Panc1 (cell line): ENCODE measurements at regions of chr2 and their contacts with region 1.

Region 1: DNA sequence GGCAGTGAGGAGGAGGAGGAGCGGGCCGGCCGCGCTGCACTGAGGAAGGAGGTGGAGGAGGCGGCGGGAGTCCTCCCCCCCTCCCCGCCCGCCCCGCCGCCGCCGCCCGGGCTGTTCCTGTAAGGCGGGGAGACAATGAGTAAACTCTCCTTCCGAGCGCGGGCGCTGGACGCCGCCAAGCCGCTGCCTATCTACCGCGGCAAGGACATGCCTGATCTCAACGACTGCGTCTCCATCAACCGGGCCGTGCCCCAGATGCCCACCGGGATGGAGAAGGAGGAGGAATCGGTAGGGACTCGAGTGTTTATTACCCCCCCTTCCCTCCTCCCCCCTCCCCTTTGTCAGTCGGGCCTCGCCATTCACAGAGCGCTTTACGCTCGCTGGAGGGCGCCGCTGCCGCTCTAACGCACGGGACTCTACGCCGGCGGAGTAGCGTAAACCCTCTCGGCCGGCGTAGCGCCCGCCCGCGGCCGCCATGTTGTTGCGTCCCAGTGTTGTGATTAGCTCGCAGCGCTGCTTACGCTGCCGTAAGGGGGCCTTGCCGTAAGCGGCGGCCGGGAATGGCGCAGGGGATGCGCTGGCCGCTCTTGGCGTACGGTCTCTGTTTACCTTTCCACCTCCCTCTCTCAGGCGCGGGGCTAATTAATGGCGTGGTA is 460 bp downstream of the EPC2 start:
- DNase-seq: peak; percentile 83
- ATAC-seq: peak; percentile 84
- H3K4me3 ChIP-seq: peak overlapping the region; percentile 87 to 95
- H3K27ac ChIP-seq: peak overlapping the region; percentile 80
- H3K4me1 ChIP-seq: peaks cover 13% of the 10 kb centered on the region
- H3K27me3 ChIP-seq: peaks cover 10% of the 10 kb centered on the region
- CTCF ChIP-seq: peak; percentile 47

Region 2: GRCh38 chr2:148664229-148664628 is 19.2 kb after region 1 on chr2:
- CTCF ChIA-PET with region 1: no interaction called
- POLR2A ChIA-PET with region 1: interaction called, 12 read pairs
- in situ Hi-C with region 1: no loop called
- intact Hi-C with region 1: no loop called
- DNase-seq: no peak
- ATAC-seq: no peak
- H3K4me3 ChIP-seq: no peak overlapping the region
- H3K27ac ChIP-seq: no peak overlapping the region
- H3K4me1 ChIP-seq: peaks cover 15% of the 10 kb centered on the region
- H3K27me3 ChIP-seq: no peaks in the 10 kb centered on the region
- CTCF ChIP-seq: no peak

Region 3: GRCh38 chr2:148745151-148745851 is 100.3 kb after region 1 on chr2:
- CTCF ChIA-PET with region 1: interaction called, 10 read pairs
- POLR2A ChIA-PET with region 1: no interaction called
- in situ Hi-C with region 1: no loop called
- intact Hi-C with region 1: no loop called
- DNase-seq: no peak
- ATAC-seq: no peak
- H3K4me3 ChIP-seq: no peak overlapping the region
- H3K27ac ChIP-seq: no peak overlapping the region
- H3K4me1 ChIP-seq: no peaks in the 10 kb centered on the region
- H3K27me3 ChIP-seq: no peaks in the 10 kb centered on the region
- CTCF ChIP-seq: no peak

Region 4: GRCh38 chr2:149399934-149400615 is 755.1 kb after region 1 on chr2:
- CTCF ChIA-PET with region 1: no interaction called
- POLR2A ChIA-PET with region 1: no interaction called
- in situ Hi-C with region 1: no loop called
- intact Hi-C with region 1: loop called (anchors 10 kb)
- DNase-seq: no peak
- ATAC-seq: no peak
- H3K4me3 ChIP-seq: no peak overlapping the region
- H3K27ac ChIP-seq: no peak overlapping the region
- H3K4me1 ChIP-seq: no peaks in the 10 kb centered on the region
- H3K27me3 ChIP-seq: no peaks in the 10 kb centered on the region
- CTCF ChIP-seq: no peak